Dorsolateral prefrontal cortex (tissue), 120 donors: ENCODE measurements at regions of chr7 and their contacts with region 1.

Region 1: DNA sequence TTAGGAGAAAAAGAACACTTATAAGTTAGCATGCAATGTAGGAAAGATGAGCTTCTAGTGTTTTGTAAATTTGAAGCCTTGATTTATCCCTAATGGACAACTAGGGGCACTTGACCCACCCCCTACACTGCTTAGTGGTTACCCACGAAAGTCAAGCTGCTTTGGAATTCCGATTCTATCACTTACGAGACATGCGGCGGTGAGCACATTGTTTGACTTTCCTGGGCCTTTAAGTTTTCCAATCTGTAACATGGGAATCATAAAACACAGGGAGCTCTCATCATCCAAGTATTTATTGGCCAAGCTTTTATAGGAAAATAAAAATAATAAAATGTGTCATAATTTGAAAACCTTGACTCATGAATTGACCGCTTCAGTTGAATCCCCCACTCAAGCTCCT is 78.7 kb upstream of the PDK4 start:
- DNase-seq: no peak
- H3K4me3 ChIP-seq: no peak overlapping the region
- H3K27ac ChIP-seq: no peak overlapping the region
- H3K27me3 ChIP-seq: no peaks in the 10 kb centered on the region
- CTCF ChIP-seq: no peak

Region 2: DNA sequence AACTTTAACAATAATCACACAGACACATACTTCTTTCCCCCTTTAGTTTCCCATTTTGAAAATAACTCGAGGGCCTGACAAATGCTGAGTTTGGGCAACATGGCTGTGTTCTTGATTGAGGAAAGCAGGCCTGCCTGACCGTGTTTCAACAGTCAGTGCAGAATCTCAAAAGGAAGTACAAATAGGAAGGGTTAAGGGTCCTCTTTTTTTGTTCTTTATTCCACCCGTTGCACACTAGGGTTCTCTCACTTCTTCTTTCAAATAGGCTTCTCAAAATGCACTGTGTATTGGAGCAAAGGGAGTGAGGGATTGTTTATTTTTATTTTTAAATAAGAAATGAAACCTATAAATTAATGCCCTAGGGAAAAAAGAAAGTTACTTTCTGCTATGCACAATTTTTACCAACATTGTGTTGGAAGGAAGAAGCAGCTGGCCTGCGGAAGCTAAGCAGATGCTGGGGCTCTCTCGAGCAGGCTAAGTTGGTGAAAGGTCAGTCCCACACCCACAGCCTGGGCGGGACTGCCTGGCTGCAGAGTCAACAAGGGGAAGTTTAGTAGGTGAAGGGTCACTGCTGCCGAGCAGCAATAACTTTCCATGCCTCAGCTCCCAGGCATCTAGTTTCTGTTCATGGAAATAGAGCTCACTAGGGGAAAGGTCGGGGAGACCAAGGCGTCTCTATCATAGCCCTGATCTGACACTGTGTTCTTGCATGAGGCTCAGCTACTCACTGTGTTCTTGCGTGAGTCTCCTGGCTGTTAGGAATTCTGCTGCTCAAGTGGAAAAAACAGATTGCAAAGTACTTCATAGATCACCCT is 66.5 kb before region 1 on chr7:
- intact Hi-C with region 1: loop called (anchors 5 kb)
- DNase-seq: peak; percentile 9 to 71 (median 64)
- H3K4me3 ChIP-seq: peak overlapping the region in 42 of 59 donors; percentile 0 to 48 (median 20)
- H3K27ac ChIP-seq: peak overlapping the region; percentile 51 to 95 (median 85)
- H3K27me3 ChIP-seq: no peaks in the 10 kb centered on the region
- CTCF ChIP-seq: peak in 1 of 56 donors; percentile 13

Region 3: GRCh38 chr7:95993380-95993779 is 318.4 kb after region 1 on chr7:
- intact Hi-C with region 1: no loop called
- DNase-seq: no peak
- H3K4me3 ChIP-seq: no peak overlapping the region
- H3K27ac ChIP-seq: no peak overlapping the region
- H3K27me3 ChIP-seq: no peaks in the 10 kb centered on the region
- CTCF ChIP-seq: peak in 16 of 56 donors; percentile 5 to 34 (median 16)